T-cell (primary cell): ENCODE measurements at regions of chr1 and their contacts with region 1.

Region 1: GRCh38 chr1:108125312-108126138 is 74.6 kb downstream of the SLC25A24 start:
- DNase-seq: peak; percentile 27 to 86 (median 58)
- ATAC-seq: peak; percentile 84 to 93 (median 88)
- H3K4me3 ChIP-seq: no peak overlapping the region
- H3K4me3 Mint-ChIP-seq: no peak overlapping the region
- H3K27ac ChIP-seq: no peak overlapping the region
- H3K27ac Mint-ChIP-seq: peak overlapping the region in 1 of 2 donors; percentile 13
- H3K4me1 ChIP-seq: no peaks in the 10 kb centered on the region
- H3K4me1 Mint-ChIP-seq: peaks cover 4 to 5% (median 5%) of the 10 kb centered on the region in 3 donors
- H3K27me3 ChIP-seq: no peaks in the 10 kb centered on the region
- H3K27me3 Mint-ChIP-seq: no peaks in the 10 kb centered on the region

Region 2: DNA sequence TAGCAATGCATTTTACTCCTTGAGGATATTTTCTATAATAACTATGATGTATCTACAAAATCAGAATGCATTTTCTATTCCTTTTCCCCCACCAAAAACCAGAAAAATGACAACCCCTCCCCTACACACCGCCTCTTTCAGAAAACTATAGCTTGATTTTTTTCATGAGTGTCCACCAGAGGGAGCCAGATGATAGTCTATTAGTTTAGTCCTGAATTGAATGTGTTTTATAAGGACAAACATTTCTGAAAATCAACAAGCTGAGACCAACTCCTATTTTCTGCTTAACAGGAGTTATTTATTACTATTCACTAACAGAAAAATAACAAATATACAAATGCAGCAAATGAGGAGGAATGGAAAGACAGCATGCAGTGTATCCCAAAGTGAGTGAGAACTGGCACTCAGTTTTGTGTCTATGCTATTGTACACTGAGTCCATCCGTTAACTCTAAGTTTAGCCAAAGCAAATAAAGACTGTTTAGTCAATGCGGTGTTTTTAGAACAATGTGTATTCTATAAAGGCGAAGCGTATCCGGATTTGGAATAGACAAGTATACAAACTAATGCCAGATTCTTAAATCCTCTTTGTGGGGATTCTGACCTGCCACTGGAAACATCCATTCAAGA is 343.2 kb before region 1 on chr1:
- CTCF ChIA-PET with region 1: interaction called, 130 to 335 read pairs
- POLR2A ChIA-PET with region 1: interaction called, 3 to 11 read pairs
- DNase-seq: peak in 16 of 35 experiments; percentile 5 to 85 (median 34)
- ATAC-seq: no peak
- H3K4me3 ChIP-seq: no peak overlapping the region
- H3K4me3 Mint-ChIP-seq: no peak overlapping the region
- H3K27ac ChIP-seq: no peak overlapping the region
- H3K27ac Mint-ChIP-seq: no peak overlapping the region
- H3K4me1 ChIP-seq: peaks cover 20 to 22% of the 10 kb centered on the region in 2 experiments
- H3K4me1 Mint-ChIP-seq: peaks cover 33 to 42% (median 35%) of the 10 kb centered on the region in 3 donors
- H3K27me3 ChIP-seq: no peaks in the 10 kb centered on the region
- H3K27me3 Mint-ChIP-seq: no peaks in the 10 kb centered on the region